ENCODE measurements at regions of chr17 and their contacts with region 1.

Region 1: DNA sequence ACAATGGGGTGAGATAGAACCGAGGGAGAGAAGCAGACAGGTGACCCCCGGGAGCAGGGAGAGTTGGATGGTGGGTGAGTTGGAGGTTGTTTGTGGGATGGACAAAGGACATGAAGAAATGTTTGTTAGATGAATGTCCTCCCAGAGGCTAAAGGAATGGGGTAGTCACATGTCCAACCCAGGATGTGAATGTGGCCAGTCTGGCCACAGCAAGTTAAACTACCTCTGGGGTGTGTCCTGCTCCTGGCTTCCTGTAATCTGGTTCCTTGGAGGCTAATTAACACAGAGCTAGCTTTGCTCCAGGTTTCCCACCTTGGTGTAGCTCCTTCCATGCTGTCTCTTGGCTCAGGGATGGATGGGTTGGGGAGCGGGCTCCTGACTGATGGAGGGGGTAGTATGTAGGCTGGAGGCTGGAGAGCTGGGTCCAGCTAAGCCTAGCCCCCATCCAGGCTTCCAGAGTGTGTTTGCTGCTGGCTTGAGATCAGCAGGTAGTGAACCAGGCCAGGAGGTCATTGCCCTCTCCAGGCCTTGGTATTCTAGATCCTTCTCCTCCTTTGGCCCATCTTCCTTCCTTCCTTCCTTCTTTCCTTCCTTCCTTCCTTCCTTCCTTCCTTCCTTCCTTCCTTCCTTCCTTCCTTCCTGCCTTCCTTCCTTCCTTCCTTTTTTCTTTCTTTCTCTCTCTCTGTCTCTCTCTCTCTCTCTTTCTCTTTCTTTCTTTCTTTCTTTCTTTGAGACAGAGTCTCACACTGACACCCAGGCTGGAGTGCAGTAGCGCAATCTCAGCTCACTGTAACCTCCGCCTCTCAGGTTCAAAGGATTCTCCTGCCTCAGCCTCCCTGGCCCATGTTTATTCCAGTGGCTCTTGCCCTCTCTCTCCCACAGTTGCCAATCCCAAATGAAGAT is 28.0 kb upstream of the UBE2G1 start:
- DNase-seq: no peak
- H3K4me3 ChIP-seq: peak overlapping the region; percentile 59
- H3K27ac ChIP-seq: peak overlapping the region; percentile 97
- H3K4me1 ChIP-seq: peaks cover 83% of the 10 kb centered on the region
- CTCF ChIP-seq: no peak

Region 2: GRCh38 chr17:4375039-4375748 is 19.3 kb before region 1 on chr17:
- CTCF ChIA-PET with region 1: interaction called, 3 read pairs
- POLR2A ChIA-PET with region 1: interaction called, 29 read pairs
- intact Hi-C with region 1: loop called (anchors 1 kb)
- DNase-seq: peak; percentile 94
- H3K4me3 ChIP-seq: peak overlapping the region; percentile 61
- H3K27ac ChIP-seq: peak overlapping the region; percentile 99
- H3K4me1 ChIP-seq: peaks cover 94% of the 10 kb centered on the region
- CTCF ChIP-seq: no peak

Region 3: GRCh38 chr17:4381690-4382671 is 12.5 kb before region 1 on chr17:
- CTCF ChIA-PET with region 1: no interaction called
- POLR2A ChIA-PET with region 1: interaction called, 29 read pairs
- intact Hi-C with region 1: no loop called
- DNase-seq: no peak
- H3K4me3 ChIP-seq: no peak overlapping the region
- H3K27ac ChIP-seq: peak overlapping the region; percentile 86
- H3K4me1 ChIP-seq: peaks cover 64% of the 10 kb centered on the region
- CTCF ChIP-seq: no peak

Measured in OCI-LY7 (cell line).